ENCODE measurements at regions of chr17 and their contacts with region 1.

Region 1: GRCh38 chr17:82030470-82031302 is 792 bp upstream of the RAC3 start:
- H3K4me3 ChIP-seq: peak overlapping the region; percentile 38
- H3K27ac ChIP-seq: peak overlapping the region; percentile 93
- H3K4me1 ChIP-seq: peaks cover 2% of the 10 kb centered on the region; the same call in 1 of the 2 replicates
- CTCF ChIP-seq: peak; percentile 99

Region 2: DNA sequence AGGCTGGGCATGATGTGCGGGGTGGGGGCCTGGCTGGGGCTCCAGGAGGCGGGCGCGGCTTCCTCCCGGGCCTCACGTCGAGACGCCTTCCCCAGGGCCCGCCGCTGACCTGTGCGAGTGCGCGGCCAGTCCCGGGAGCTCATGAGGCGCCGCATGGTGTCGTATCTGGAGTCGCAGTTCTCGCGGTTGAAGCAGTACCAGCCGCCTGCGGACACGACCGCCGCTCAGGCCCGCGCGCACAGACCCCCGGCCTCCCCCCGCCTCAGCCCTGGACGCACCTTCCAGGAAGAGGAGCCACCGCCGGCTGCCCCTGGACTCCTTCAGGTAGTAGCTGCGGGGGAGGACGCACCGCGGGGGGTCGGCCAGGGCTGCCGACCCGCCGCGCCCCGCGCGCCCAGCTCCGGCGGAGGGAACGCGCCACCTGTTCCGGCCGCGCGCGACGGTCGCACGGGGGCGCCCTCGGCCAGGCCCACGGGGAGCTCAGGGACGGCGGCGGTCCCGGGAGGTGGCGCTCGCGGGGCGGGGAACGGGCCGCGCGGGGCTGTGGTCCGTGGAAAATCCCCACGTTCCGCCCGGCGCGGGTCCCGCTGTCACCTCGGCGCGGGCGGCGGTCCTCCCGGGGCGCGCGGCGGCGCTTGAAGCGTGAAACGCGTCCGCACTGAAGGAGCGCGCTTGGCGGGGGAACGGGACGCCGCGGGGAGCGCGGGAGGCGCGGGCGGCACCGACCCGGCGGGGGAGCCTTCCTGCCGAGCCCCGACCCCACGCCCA is 71.1 kb before region 1 on chr17:
- CTCF ChIA-PET with region 1: interaction called, 11 read pairs
- POLR2A ChIA-PET with region 1: interaction called, 8 read pairs
- H3K4me3 ChIP-seq: peak overlapping the region; percentile 20
- H3K27ac ChIP-seq: peak overlapping the region; percentile 31; the same call in 1 of the 2 replicates
- H3K4me1 ChIP-seq: peaks cover 4% of the 10 kb centered on the region; the same call in 1 of the 2 replicates
- CTCF ChIP-seq: no peak

Region 3: DNA sequence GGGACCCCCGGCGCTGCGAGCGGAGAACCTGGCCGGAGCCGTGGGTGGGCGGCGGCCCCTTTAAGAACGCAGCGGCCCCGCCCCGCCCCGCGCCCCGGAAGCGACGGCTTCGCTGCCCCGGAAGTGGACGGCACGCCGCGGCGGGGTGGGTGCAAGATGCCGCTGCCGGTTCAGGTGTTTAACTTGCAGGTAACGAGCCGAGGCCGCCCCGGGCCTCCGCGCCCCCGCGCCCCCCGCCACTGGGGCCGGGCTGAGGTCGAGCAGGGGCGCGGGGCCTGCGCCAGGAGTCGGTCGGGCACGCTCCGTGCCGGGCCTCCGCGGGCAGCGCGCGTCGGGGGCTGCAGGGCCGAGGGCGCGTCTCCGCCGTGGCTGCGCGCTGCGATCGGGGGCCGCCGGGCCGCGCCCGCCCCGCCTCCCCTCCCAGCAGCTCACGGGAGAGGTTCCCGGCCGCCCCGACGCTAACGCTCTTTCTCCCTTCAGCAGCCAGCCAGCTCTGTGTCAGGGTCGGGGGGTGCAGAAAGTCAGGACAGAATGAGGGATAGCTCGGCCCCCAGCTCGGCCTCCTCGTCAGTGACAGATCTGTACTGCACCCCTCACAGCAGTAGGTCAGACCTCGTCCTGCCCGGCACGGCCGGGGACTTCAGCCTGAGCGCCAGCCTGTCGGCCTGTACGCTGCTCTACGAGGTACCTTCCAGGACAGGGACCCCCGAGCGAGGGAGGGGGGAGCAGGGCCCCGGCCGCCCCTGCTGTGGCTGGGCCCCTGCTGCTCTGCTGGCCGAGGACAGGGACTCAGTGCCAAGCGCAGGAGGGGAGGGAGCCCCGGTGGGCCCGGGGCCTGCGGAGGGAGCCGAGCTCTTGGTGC is 21.3 kb after region 1 on chr17 and contains the starts of genes GPS1 and RFNG:
- CTCF ChIA-PET with region 1: interaction called, 9 read pairs
- POLR2A ChIA-PET with region 1: interaction called, 56 read pairs
- H3K4me3 ChIP-seq: peak within 1 kb of the TSS; percentile 83
- H3K27ac ChIP-seq: peak within 1 kb of the TSS; percentile 73
- H3K4me1 ChIP-seq: peaks cover 7% of the 10 kb centered on the region
- CTCF ChIP-seq: no peak

Region 4: DNA sequence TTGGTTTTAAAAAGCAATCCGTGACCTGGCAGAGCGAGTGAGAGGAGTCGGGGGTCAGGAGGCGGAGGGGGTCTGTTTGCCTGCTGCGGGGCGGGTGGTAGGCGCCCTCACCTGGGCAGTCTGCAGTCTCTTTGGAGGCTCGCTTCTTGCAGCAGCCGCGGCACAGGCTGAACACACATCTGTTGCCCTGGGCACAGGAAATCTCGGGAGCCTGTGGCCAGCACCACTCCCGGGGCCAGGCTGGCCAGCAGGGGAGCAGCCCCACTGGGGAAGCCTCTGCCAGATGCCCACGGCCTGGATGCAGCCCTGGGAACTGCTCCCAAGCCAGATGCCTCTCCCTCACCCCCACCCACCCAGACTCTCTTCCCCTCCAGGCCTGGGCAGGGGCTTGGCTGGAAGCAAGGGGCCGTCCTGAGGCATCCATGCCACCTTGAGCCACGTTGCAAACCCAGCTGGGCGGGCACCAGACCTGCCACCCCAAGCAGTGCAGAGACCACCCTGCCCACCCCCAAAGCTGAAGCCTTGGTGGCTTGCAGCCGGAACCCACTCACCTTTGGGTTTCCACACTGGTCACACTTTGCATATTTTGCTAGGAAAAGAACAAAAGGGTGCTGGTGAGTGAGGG is 27.7 kb after region 1 on chr17:
- CTCF ChIA-PET with region 1: interaction called, 9 read pairs
- POLR2A ChIA-PET with region 1: interaction called, 56 read pairs
- H3K4me3 ChIP-seq: no peak overlapping the region
- H3K27ac ChIP-seq: peak overlapping the region; percentile 25; the same call in 1 of the 2 replicates
- H3K4me1 ChIP-seq: no peaks in the 10 kb centered on the region
- CTCF ChIP-seq: peak; percentile 62

Region 5: GRCh38 chr17:82077617-82078358 is 47.1 kb after region 1 on chr17:
- CTCF ChIA-PET with region 1: interaction called, 13 read pairs
- POLR2A ChIA-PET with region 1: interaction called, 6 read pairs
- H3K4me3 ChIP-seq: no peak overlapping the region
- H3K27ac ChIP-seq: peak overlapping the region; percentile 11; the same call in 1 of the 2 replicates
- H3K4me1 ChIP-seq: no peaks in the 10 kb centered on the region
- CTCF ChIP-seq: no peak

Region 6: DNA sequence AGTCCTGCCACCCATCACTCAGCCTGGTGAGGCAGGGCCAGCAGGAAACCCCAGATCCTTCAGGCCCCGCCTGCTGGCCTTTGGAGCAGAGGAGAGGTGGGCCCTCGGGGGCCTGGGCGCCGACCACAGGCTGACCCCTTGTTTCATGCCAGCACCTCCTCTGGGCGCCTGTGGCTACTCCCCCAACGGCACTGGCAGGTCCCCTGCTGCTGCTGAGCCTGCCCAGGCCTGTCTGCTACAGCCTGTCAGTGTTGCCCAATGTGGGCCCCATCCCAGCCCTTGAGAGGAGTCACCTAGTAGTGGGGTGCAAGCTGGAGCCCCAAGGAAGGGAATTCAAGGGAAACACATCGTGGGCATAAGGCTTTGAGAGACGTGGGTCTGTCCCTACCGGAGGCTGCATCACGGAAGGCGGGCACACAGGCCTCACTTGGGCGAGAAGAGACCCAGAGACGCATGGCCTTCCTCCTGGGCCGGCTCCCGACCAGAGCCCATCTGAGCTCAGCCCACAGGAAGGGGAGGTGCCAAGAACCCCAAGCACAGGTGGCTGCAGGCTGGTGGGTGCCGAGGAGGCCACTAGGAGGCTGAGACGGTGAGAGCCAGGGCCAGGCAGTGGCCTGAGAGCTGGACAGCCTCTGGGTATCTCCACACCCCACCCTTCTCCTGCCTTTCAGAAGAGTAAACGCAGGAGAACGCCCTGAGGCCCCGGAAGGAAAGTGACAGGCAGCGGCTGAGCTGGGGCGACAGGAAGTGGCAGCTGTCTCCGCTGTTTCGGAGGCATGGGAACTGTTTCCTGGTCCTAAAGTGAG is 75.4 kb after region 1 on chr17:
- CTCF ChIA-PET with region 1: interaction called, 3 read pairs
- POLR2A ChIA-PET with region 1: interaction called, 14 read pairs
- H3K4me3 ChIP-seq: no peak overlapping the region
- H3K27ac ChIP-seq: peak overlapping the region; percentile 64
- H3K4me1 ChIP-seq: peaks cover 10% of the 10 kb centered on the region
- CTCF ChIP-seq: peak; percentile 82

Region 7: DNA sequence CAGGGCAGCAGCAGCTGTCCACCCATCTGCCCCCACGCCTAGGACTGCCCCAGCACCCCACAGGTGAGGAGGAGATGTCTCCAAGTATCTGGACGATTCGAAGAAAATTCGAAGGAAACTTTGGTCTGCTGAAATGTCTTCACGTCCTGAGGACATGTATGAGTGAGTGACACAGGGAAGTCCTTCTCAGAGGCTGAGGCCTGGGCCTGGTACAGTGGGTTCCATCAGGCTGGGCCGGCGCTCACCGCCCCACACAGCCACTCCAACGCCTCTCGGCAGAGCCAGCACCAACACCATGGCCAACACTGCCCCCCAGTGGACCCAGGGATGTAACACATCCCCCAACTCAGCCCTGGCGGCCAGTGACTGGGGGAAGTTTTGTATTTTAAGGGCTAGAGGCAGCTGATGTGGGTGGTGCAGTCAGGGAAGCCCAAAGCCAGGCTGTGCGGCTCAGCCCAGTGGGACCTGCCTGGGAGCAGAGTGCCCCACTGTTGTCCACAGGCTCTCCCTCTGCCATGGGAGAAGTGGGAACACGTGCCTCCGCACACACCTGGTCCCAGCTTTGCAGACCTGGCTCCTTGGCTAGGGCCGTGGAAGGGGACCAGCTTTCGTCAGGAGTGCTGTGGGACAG is 123.2 kb after region 1 on chr17:
- CTCF ChIA-PET with region 1: interaction called, 35 read pairs
- POLR2A ChIA-PET with region 1: interaction called, 12 read pairs
- H3K4me3 ChIP-seq: no peak overlapping the region
- H3K27ac ChIP-seq: no peak overlapping the region
- H3K4me1 ChIP-seq: no peaks in the 10 kb centered on the region
- CTCF ChIP-seq: peak; percentile 96

Measured in HEK293 (cell line).